ENCODE measurements at regions of chr6 and their contacts with region 1.

Region 1: DNA sequence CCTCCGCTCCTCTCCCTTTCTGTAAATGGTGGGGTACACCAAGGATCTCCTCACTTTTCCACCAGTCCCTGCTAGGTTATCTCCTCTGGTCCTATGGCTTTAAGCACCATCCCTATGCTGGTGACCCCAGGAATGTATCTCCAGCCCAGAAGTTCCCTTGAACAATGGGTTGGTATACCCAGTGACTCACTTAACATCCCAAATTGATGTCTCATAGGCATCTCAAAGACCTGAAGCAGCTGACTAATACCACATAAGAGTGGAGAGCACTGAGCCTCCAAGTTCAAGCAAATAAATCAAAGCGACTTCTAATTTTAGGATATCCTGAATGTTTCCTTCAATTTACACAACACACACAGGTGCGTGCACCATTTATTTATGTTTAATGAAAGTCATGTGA is 48.3 kb downstream of the ADGRF1 start:
- DNase-seq: no peak
- H3K4me3 ChIP-seq: no peak overlapping the region
- H3K27ac ChIP-seq: no peak overlapping the region
- H3K4me1 ChIP-seq: no peaks in the 10 kb centered on the region
- H3K27me3 ChIP-seq: no peaks in the 10 kb centered on the region
- CTCF ChIP-seq: no peak
- POLR2A ChIP-seq: no peak

Region 2: DNA sequence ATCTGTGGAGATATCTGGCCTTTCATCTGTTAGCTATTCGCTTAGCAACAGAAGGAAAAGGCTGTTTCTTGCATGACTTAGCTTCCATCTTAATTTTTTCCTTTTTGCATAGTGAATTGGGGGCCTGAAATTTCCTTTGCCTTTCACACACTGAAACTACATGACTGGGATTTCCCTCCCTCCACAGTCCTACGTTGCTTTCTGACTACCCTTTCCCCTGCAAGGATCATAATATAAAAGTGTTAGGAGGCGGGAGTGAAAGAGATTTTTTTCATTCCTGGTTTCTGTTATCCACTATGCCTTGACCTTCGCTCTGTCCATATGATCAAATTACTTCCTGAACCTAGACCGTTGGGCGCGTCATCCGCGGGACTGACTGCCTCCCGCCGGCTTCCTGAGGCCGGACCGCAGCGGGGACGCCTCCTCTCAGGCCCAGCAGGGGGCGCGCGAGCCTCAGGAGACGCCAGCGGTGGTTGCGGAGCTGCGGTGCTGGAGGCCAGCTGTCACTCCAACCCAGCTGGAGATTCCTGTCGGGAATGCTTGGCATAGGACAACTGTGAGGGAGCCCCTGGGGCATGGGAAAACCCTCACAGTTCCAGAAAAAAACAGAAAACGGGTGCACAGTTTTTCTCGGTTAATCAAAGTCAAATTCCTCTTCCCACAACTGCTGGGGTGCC is 145.0 kb before region 1 on chr6:
- intact Hi-C with region 1: loop called (anchors 10 kb)
- DNase-seq: peak; percentile 71 to 83
- H3K4me3 ChIP-seq: no peak overlapping the region
- H3K27ac ChIP-seq: no peak overlapping the region
- H3K4me1 ChIP-seq: no peaks in the 10 kb centered on the region
- H3K27me3 ChIP-seq: no peaks in the 10 kb centered on the region
- CTCF ChIP-seq: peak; percentile 90 to 98 (median 94)
- POLR2A ChIP-seq: no peak